ENCODE measurements at regions of chr6 and their contacts with region 1.

Region 1: DNA sequence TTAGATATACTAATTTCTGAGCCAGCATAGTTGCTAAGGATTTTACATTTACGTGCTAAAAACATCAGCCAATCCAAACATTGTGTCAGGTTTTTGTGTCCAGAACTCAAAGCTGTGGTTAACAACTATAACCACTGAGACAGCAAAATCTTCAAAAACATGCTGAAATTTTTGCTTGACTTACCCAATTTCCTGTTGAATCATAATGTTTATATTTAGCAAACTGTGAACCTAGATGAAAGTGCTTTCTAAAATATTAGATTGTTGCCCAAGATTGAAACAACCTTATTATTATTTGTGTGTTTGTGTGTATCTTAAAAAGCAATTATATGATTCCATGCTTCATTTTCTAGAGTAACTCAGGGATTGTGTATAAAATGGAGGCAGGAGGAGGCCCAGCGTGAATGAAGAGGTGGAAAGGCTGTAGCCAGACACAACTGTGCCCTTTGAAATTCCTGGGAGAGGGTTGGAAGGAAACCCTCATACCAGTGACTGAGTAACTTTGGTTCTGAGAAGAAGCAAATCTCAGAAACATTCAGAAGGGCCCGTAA is 48.0 kb downstream of the ARMC2 start:
- DNase-seq: peak; percentile 88
- H3K4me3 Mint-ChIP-seq: peak overlapping the region; percentile 40
- H3K27ac Mint-ChIP-seq: peak overlapping the region; percentile 97
- H3K4me1 Mint-ChIP-seq: peaks cover 29% of the 10 kb centered on the region
- H3K27me3 Mint-ChIP-seq: no peaks in the 10 kb centered on the region
- CTCF ChIP-seq: no peak

Region 2: GRCh38 chr6:108541838-108542759 is 354.1 kb before region 1 on chr6:
- CTCF ChIA-PET with region 1: interaction called, 87 read pairs
- POLR2A ChIA-PET with region 1: interaction called, 14 read pairs
- intact Hi-C with region 1: loop called (anchors 1 kb)
- DNase-seq: peak; percentile 81
- H3K4me3 Mint-ChIP-seq: no peak overlapping the region
- H3K27ac Mint-ChIP-seq: no peak overlapping the region
- H3K4me1 Mint-ChIP-seq: peaks cover 6% of the 10 kb centered on the region
- H3K27me3 Mint-ChIP-seq: no peaks in the 10 kb centered on the region
- CTCF ChIP-seq: peak; percentile 88

Region 3: GRCh38 chr6:108689247-108690161 is 206.7 kb before region 1 on chr6:
- CTCF ChIA-PET with region 1: interaction called, 5 read pairs
- POLR2A ChIA-PET with region 1: no interaction called
- intact Hi-C with region 1: loop called (anchors 1 kb)
- DNase-seq: peak; percentile 100
- H3K4me3 Mint-ChIP-seq: peak overlapping the region; percentile 32
- H3K27ac Mint-ChIP-seq: peak overlapping the region; percentile 73
- H3K4me1 Mint-ChIP-seq: peaks cover 51% of the 10 kb centered on the region
- H3K27me3 Mint-ChIP-seq: no peaks in the 10 kb centered on the region
- CTCF ChIP-seq: no peak

Region 4: GRCh38 chr6:108835218-108835850 is 60.9 kb before region 1 on chr6:
- CTCF ChIA-PET with region 1: interaction called, 8 read pairs
- POLR2A ChIA-PET with region 1: interaction called, 3 read pairs
- intact Hi-C with region 1: loop called (anchors 1 kb)
- DNase-seq: peak; percentile 78
- H3K4me3 Mint-ChIP-seq: no peak overlapping the region
- H3K27ac Mint-ChIP-seq: no peak overlapping the region
- H3K4me1 Mint-ChIP-seq: peaks cover 34% of the 10 kb centered on the region
- H3K27me3 Mint-ChIP-seq: no peaks in the 10 kb centered on the region
- CTCF ChIP-seq: peak; percentile 94

Region 5: GRCh38 chr6:109009236-109009961 is 113.2 kb after region 1 on chr6:
- CTCF ChIA-PET with region 1: interaction called, 3 read pairs
- POLR2A ChIA-PET with region 1: interaction called, 11 read pairs
- intact Hi-C with region 1: loop called (anchors 1 kb)
- DNase-seq: peak; percentile 89
- H3K4me3 Mint-ChIP-seq: peak overlapping the region; percentile 93
- H3K27ac Mint-ChIP-seq: peak overlapping the region; percentile 94
- H3K4me1 Mint-ChIP-seq: peaks cover 24% of the 10 kb centered on the region
- H3K27me3 Mint-ChIP-seq: no peaks in the 10 kb centered on the region
- CTCF ChIP-seq: no peak

Measured in MCF 10A (cell line).